ENCODE measurements at regions of chr1 and their contacts with region 1.

Region 1: GRCh38 chr1:15028102-15028501 is 125.4 kb upstream of the TMEM51 start:
- DNase-seq: peak; percentile 24 to 51
- H3K4me3 ChIP-seq: no peak overlapping the region
- H3K4me3 Mint-ChIP-seq: no peak overlapping the region
- H3K27ac Mint-ChIP-seq: peak overlapping the region; percentile 32
- H3K4me1 ChIP-seq: peaks cover 8% of the 10 kb centered on the region
- H3K4me1 Mint-ChIP-seq: peaks cover 12% of the 10 kb centered on the region
- H3K27me3 ChIP-seq: no peaks in the 10 kb centered on the region
- H3K27me3 Mint-ChIP-seq: no peaks in the 10 kb centered on the region
- CTCF ChIP-seq: no peak

Region 2: GRCh38 chr1:14787604-14788003 is 240.5 kb before region 1 on chr1:
- CTCF ChIA-PET with region 1: no interaction called
- POLR2A ChIA-PET with region 1: no interaction called
- intact Hi-C with region 1: loop called (anchors 5 kb)
- DNase-seq: peak; percentile 65 to 75
- H3K4me3 ChIP-seq: no peak overlapping the region
- H3K4me3 Mint-ChIP-seq: no peak overlapping the region
- H3K27ac Mint-ChIP-seq: no peak overlapping the region
- H3K4me1 ChIP-seq: peaks cover 17% of the 10 kb centered on the region
- H3K4me1 Mint-ChIP-seq: no peaks in the 10 kb centered on the region
- H3K27me3 ChIP-seq: no peaks in the 10 kb centered on the region
- H3K27me3 Mint-ChIP-seq: no peaks in the 10 kb centered on the region
- CTCF ChIP-seq: no peak

Region 3: DNA sequence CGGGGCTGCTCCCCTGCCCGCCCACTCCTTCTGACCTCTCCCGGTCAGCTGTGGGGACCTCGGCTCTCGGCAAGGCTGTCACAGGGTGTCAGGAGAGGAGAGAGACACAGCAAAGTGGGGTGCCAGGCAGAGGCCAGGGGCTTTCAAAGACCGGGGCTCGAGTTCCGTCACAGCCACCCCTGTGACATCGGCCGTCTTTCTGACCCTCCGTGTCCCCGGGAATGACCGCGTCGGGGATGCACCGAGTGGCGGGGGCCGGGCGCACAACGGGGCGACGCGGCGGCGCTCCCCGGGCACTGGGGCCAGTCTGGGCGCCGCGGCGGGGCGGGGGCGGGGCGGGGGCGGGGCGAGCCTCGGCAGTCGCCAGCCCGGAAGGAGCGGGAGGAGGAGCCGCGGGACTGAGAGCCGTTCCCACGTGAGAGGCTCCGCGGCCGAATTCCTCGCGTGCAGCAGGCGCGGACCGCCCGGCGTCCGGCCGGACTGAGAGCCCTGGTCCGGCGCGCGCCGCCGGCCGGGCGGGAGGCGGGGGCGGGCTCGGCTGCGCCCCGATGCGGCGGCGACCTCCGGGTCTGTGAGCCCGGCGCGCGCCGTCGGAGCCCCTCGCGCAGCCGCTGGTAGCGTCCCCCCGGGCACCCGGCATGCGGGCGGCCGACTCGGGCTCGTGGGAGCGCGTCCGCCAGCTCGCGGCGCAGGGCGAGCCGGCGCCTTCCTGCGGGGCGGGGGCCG is 104.2 kb before region 1 on chr1:
- CTCF ChIA-PET with region 1: no interaction called
- POLR2A ChIA-PET with region 1: no interaction called
- intact Hi-C with region 1: loop called (anchors 2 kb)
- DNase-seq: peak; percentile 52 to 54
- H3K4me3 ChIP-seq: peak overlapping the region; percentile 52
- H3K4me3 Mint-ChIP-seq: peak overlapping the region; percentile 71
- H3K27ac Mint-ChIP-seq: no peak overlapping the region
- H3K4me1 ChIP-seq: no peaks in the 10 kb centered on the region
- H3K4me1 Mint-ChIP-seq: no peaks in the 10 kb centered on the region
- H3K27me3 ChIP-seq: no peaks in the 10 kb centered on the region; the same call in 1 of the 2 replicates
- H3K27me3 Mint-ChIP-seq: no peaks in the 10 kb centered on the region
- CTCF ChIP-seq: no peak

Measured in Caco-2 (cell line).